ENCODE measurements at regions of chr10 and their contacts with region 1.

Region 1: DNA sequence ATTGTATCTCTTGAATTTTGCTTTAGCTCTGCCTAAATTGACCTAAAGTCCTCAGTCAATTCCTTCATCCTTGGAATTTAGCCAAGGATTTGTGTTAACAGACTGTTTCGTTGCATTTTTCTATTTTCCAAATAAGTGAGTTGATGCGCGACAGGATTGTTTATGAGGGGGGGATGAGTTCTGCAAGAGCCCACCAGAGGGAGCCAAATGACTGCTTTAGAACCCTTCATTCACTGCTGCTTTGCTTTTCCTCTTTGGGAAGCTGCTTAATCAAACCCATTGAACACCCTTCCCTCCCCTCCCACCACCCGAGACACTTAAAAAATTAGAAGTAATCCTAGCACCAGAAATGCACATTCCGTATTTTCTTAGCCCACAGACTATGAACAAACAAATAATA is 33.7 kb upstream of the PTF1A start:
- DNase-seq: peak; percentile 85
- H3K4me3 ChIP-seq: peak overlapping the region; percentile 25 to 49; a peak in 3 of 4 replicates
- H3K27ac ChIP-seq: no peak overlapping the region
- H3K4me1 ChIP-seq: peaks cover 0 to 3% of the 10 kb centered on the region in 2 experiments; a peak in 1 of 4 replicates
- H3K27me3 ChIP-seq: peaks cover 7% of the 10 kb centered on the region; the same call in 1 of the 2 replicates
- CTCF ChIP-seq: peak; percentile 94
- EP300 ChIP-seq: no peak
- RAD21 ChIP-seq: peak; percentile 91

Region 2: GRCh38 chr10:22244001-22244400 is 914.4 kb before region 1 on chr10:
- CTCF ChIA-PET with region 1: no interaction called
- POLR2A ChIA-PET with region 1: no interaction called
- DNase-seq: no peak
- H3K4me3 ChIP-seq: no peak overlapping the region
- H3K27ac ChIP-seq: no peak overlapping the region
- H3K4me1 ChIP-seq: no peaks in the 10 kb centered on the region; a peak in 1 of 4 replicates
- H3K27me3 ChIP-seq: no peaks in the 10 kb centered on the region
- CTCF ChIP-seq: peak; percentile 15; the same call in 1 of the 2 replicates
- EP300 ChIP-seq: no peak
- RAD21 ChIP-seq: no peak

Region 3: DNA sequence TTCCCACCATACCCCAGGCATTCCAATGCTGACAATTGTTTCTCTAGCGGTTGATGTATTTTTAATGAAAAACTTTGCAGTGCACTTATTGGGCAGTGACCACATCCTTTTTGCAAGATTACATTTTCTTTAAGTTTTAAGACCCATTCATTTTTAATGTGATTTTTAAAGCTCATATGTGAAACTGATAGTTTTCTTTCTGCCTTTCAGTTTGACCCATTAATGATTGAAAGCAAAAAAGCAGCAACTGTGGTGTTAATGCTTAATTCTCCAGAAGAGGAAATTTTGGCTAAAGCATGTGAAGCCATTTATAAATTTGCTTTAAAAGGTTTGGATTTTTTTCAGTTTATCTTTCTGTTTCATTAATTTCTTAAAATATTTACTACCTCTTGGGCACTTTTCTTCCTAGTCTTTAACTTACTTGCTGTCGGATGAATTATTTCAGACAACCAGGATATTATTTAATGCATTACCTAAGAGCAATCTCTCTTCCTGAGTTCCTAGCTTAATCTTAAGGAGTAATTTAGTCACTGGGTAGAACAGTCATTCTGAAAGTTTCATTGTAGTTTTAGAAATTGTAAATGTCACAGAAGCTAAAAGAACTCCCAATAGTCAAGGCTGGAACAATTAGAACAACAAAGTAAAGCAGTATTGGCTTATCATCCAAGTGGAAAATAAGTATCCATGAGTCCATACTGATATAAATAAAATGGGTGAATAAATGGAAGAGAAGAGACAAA is 212.3 kb before region 1 on chr10:
- CTCF ChIA-PET with region 1: no interaction called
- POLR2A ChIA-PET with region 1: no interaction called
- DNase-seq: no peak
- H3K4me3 ChIP-seq: no peak overlapping the region
- H3K27ac ChIP-seq: no peak overlapping the region
- H3K4me1 ChIP-seq: no peaks in the 10 kb centered on the region
- H3K27me3 ChIP-seq: no peaks in the 10 kb centered on the region
- CTCF ChIP-seq: no peak
- EP300 ChIP-seq: no peak
- RAD21 ChIP-seq: no peak

Region 4: DNA sequence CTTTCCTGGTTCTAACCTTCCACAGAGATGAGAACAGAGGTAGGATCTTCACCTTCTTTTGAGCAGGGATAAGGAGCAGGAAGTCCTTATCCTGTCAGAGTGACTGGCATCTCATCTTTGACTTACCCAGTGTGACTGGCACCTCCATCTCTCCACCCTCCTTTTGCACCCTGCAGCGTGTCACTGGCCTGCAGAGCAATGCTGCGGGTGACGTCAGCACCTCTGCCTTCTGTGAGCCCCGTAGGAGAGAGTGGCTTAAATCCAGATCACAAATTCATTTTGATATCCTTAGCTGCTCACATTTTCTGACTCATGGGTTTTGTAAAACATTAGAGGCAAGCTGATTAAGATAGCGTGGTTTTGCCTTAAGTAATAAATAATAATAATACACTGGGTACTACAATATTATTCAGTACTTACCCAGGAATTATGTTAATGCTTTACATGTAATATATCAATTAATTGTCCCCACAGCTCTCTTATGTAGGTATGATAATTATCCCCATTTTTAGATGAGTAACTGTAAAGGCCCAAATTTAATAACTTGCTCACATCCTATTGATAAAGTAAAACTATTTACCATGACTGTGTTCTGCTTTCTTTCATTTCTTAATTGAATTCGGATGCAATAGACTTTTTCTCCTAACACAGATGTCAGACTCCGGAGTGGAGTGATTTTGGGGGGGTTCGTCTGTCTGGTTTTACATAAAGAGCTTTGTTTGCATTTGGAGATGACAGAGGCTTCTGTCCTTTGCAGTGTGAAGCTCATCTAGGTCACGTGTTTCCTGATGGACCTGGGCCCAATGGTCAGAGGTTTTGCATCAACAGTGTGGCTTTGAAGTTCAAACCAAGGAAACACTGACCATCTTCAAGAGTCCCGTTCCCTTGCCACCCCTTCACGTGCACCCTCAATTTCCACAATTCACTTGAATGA is 38.1 kb before region 1 on chr10:
- CTCF ChIA-PET with region 1: interaction called, 13 read pairs
- POLR2A ChIA-PET with region 1: no interaction called
- DNase-seq: peak; percentile 66
- H3K4me3 ChIP-seq: no peak overlapping the region
- H3K27ac ChIP-seq: peak overlapping the region in 1 of 2 experiments; percentile 71; a peak in 2 of 4 replicates
- H3K4me1 ChIP-seq: peaks cover 0 to 23% of the 10 kb centered on the region in 2 experiments; a peak in 2 of 4 replicates
- H3K27me3 ChIP-seq: no peaks in the 10 kb centered on the region
- CTCF ChIP-seq: no peak
- EP300 ChIP-seq: peak in 1 of 2 experiments; percentile 81; a peak in 2 of 4 replicates
- RAD21 ChIP-seq: no peak

Region 5: DNA sequence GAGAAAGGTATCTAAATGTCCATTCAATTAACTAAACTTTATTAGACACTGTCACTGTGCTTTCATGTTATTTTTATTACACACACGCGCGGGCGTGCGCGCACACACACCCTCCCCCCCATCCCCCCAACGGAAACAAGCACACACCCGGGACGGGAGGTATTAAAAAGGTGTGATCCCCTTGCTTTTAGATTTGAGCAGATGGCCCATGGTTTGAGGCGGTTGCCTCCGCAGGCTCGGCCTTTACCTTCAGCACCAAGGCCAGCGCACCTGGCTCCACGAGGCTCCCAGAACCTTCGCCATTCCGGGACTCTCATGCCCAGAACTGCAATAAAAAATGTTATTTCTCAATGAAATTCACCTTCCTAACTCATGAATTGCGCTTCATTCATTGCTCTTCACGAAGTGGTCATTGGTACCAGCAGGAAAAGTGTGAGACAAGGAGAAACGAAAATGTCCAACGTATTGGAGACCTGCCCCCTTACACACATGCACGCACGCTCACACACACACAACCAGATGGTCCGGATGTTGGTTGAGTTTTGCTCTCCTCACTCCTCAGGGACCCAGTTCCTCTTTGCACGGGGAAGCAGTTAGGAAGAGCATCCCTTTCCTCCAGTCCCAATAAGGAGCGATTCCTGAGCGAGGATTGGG is 13.0 kb after region 1 on chr10:
- CTCF ChIA-PET with region 1: interaction called, 60 read pairs
- POLR2A ChIA-PET with region 1: no interaction called
- DNase-seq: no peak
- H3K4me3 ChIP-seq: no peak overlapping the region
- H3K27ac ChIP-seq: no peak overlapping the region
- H3K4me1 ChIP-seq: no peaks in the 10 kb centered on the region
- H3K27me3 ChIP-seq: peaks cover 23% of the 10 kb centered on the region; the same call in 1 of the 2 replicates
- CTCF ChIP-seq: no peak
- EP300 ChIP-seq: no peak
- RAD21 ChIP-seq: no peak

Region 6: DNA sequence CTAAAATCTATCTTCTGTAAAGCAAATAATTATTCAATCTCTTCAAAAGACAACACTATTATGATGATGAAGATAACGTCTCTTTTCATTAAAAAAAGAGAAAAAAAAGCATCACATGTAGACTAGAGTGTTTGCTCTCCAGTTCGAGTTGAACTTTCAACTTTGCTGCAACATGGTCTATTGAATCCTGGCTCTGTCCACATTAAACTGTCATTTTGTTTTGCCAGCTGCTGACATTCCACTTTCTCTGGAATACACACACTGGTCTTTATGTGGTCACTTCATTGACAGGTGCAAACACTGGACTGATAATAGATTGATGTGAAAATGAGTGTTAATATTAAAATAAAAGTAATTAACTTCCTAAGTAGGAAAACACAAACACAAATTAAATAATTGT is 95.4 kb after region 1 on chr10:
- CTCF ChIA-PET with region 1: interaction called, 10 read pairs
- POLR2A ChIA-PET with region 1: no interaction called
- DNase-seq: no peak
- H3K4me3 ChIP-seq: no peak overlapping the region
- H3K27ac ChIP-seq: no peak overlapping the region
- H3K4me1 ChIP-seq: no peaks in the 10 kb centered on the region
- H3K27me3 ChIP-seq: no peaks in the 10 kb centered on the region
- CTCF ChIP-seq: no peak
- EP300 ChIP-seq: no peak
- RAD21 ChIP-seq: no peak

Region 7: DNA sequence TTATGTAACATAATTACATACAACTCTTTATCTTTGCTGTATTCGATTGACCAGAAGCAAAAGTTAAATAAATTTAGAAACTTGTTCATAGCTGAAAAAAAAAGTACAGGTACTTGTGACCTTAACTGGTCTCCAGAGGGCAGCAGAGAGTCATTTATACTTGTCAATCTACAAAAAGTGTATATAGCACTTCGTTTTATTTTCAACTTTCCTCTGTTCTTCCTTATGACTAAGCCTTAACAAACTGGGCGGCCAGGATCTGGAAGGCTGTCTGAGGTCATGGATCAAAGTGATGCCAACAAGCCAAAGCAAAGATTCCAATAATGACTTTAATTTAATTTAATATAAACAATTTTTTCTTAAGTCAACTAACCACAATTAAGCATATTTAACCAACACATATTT is 156.5 kb after region 1 on chr10:
- CTCF ChIA-PET with region 1: interaction called, 32 read pairs
- POLR2A ChIA-PET with region 1: no interaction called
- DNase-seq: peak; percentile 48
- H3K4me3 ChIP-seq: no peak overlapping the region
- H3K27ac ChIP-seq: no peak overlapping the region
- H3K4me1 ChIP-seq: peaks cover 2 to 6% of the 10 kb centered on the region in 2 experiments; a peak in 2 of 4 replicates
- H3K27me3 ChIP-seq: no peaks in the 10 kb centered on the region
- CTCF ChIP-seq: peak; percentile 85
- EP300 ChIP-seq: peak in 1 of 2 experiments; percentile 40; a peak in 1 of 4 replicates
- RAD21 ChIP-seq: peak; percentile 91

Region 8: GRCh38 chr10:23540401-23541030 is 382.1 kb after region 1 on chr10:
- CTCF ChIA-PET with region 1: interaction called, 11 read pairs
- POLR2A ChIA-PET with region 1: no interaction called
- DNase-seq: no peak
- H3K4me3 ChIP-seq: no peak overlapping the region
- H3K27ac ChIP-seq: no peak overlapping the region
- H3K4me1 ChIP-seq: peaks cover 0 to 11% of the 10 kb centered on the region in 2 experiments; a peak in 1 of 4 replicates
- H3K27me3 ChIP-seq: no peaks in the 10 kb centered on the region
- CTCF ChIP-seq: no peak
- EP300 ChIP-seq: no peak
- RAD21 ChIP-seq: no peak

Region 9: DNA sequence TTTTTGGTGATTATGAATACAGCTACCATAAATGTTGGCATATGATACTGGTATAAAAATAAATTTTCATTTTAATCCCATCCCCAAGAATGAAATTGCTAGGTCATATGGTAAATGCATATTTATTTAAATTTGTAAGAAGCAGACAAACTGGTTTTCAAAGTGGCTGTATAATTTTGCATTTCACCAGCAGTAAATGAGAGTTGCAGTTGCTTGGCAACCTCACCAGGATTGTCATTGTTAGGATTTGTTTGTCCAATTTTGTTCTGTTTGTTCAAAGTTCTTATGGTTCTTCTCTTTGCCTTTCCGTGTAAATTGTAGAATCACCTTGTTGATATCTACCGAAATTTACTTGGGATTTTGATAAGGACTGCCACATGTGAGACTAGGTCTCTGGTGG is 517.9 kb after region 1 on chr10:
- CTCF ChIA-PET with region 1: no interaction called
- POLR2A ChIA-PET with region 1: no interaction called
- DNase-seq: no peak
- H3K4me3 ChIP-seq: no peak overlapping the region
- H3K27ac ChIP-seq: no peak overlapping the region
- H3K4me1 ChIP-seq: no peaks in the 10 kb centered on the region
- H3K27me3 ChIP-seq: no peaks in the 10 kb centered on the region
- CTCF ChIP-seq: no peak
- EP300 ChIP-seq: no peak
- RAD21 ChIP-seq: no peak

Measured in SK-N-SH (cell line).